ENCODE measurements at regions of chr7 and their contacts with region 1.

Region 1: DNA sequence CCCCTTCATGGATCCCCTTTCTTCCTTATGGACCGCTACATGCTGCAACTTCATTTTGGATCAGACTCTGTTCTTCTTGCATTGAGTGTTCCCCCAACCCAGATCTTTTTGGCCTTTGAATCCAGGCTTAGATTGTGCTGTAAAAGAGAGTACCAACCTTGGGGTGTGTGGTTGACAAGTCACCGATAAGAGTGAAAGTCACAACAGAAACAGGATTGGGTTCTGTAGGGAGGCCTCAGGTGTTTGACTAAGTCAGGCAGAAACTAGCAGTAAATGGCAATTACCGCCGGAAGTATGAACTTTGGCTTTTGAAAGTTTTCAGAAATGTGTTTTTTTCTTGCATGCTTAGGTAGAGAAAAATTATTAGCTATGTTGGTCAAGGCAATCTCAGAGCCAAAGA is 89.3 kb downstream of the TMEM106B start:
- DNase-seq: no peak
- ATAC-seq: no peak
- H3K4me3 ChIP-seq: no peak overlapping the region
- H3K27ac ChIP-seq: no peak overlapping the region
- H3K4me1 ChIP-seq: no peaks in the 10 kb centered on the region
- H3K27me3 ChIP-seq: no peaks in the 10 kb centered on the region; a peak in 3 of 4 replicates
- CTCF ChIP-seq: no peak
- EP300 ChIP-seq: no peak
- POLR2A ChIP-seq: no peak
- RAD21 ChIP-seq: no peak

Region 2: GRCh38 chr7:12233175-12233574 is 67.2 kb before region 1 on chr7:
- CTCF ChIA-PET with region 1: no interaction called
- POLR2A ChIA-PET with region 1: no interaction called
- RAD21 ChIA-PET with region 1: no interaction called
- SMC1A ChIA-PET with region 1: no interaction called
- in situ Hi-C with region 1: no loop called
- intact Hi-C with region 1: no loop called
- DNase-seq: no peak
- ATAC-seq: peak; percentile 31; the same call in 2 of the 3 replicates
- H3K4me3 ChIP-seq: no peak overlapping the region
- H3K27ac ChIP-seq: no peak overlapping the region
- H3K4me1 ChIP-seq: no peaks in the 10 kb centered on the region
- H3K27me3 ChIP-seq: no peaks in the 10 kb centered on the region
- CTCF ChIP-seq: no peak
- EP300 ChIP-seq: no peak
- POLR2A ChIP-seq: no peak
- RAD21 ChIP-seq: no peak

Region 3: DNA sequence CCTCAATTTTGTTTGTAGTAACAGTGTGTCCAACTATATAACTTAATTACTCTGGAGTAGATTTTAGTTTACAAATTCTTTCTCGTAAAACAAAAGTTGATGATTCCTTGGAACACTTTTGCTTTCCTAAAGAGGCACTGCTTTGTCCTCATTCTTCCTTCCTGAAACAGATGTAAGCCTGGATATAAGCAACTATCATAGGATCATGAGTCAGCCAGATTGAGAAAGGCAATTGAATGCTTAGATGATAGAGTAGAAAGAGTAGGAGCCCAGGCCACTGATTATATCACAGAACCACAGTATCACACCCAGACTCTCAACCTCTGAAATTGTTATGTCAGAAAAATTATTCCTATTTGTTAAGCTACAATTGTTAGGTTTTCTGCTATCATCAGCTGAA is 19.4 kb before region 1 on chr7:
- CTCF ChIA-PET with region 1: no interaction called
- POLR2A ChIA-PET with region 1: no interaction called
- RAD21 ChIA-PET with region 1: no interaction called
- SMC1A ChIA-PET with region 1: no interaction called
- in situ Hi-C with region 1: no loop called
- intact Hi-C with region 1: no loop called
- DNase-seq: no peak
- ATAC-seq: no peak
- H3K4me3 ChIP-seq: no peak overlapping the region
- H3K27ac ChIP-seq: no peak overlapping the region
- H3K4me1 ChIP-seq: no peaks in the 10 kb centered on the region
- H3K27me3 ChIP-seq: no peaks in the 10 kb centered on the region; a peak in 1 of 4 replicates
- CTCF ChIP-seq: no peak
- EP300 ChIP-seq: no peak
- POLR2A ChIP-seq: no peak
- RAD21 ChIP-seq: no peak

Region 4: DNA sequence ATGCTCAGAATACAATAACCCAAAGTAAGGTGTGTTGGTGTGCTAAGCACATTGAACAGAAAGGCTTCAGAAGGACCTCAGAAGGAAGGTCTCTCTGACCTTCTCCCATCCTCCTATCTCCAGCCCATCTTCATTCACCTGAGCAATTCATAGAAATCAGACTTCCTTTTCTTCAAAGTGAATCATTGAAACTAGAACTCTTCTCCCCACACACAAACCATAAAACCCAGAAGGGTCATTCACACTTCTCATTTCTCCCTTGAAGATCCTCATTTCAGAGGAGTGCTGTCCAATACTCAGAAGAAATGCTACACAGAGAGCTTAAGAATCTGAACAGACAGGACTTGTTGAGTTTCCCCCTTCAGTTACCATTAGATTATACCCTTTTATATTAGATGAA is 13.8 kb after region 1 on chr7:
- CTCF ChIA-PET with region 1: no interaction called
- POLR2A ChIA-PET with region 1: no interaction called
- RAD21 ChIA-PET with region 1: no interaction called
- SMC1A ChIA-PET with region 1: interaction called, 11 read pairs
- in situ Hi-C with region 1: no loop called
- intact Hi-C with region 1: no loop called
- DNase-seq: no peak
- ATAC-seq: peak; percentile 40; the same call in 1 of the 3 replicates
- H3K4me3 ChIP-seq: no peak overlapping the region
- H3K27ac ChIP-seq: no peak overlapping the region
- H3K4me1 ChIP-seq: no peaks in the 10 kb centered on the region
- H3K27me3 ChIP-seq: no peaks in the 10 kb centered on the region
- CTCF ChIP-seq: no peak
- EP300 ChIP-seq: no peak
- POLR2A ChIP-seq: no peak
- RAD21 ChIP-seq: no peak

Region 5: GRCh38 chr7:12328888-12329770 is 28.7 kb after region 1 on chr7:
- CTCF ChIA-PET with region 1: no interaction called
- POLR2A ChIA-PET with region 1: no interaction called
- RAD21 ChIA-PET with region 1: no interaction called
- SMC1A ChIA-PET with region 1: no interaction called
- in situ Hi-C with region 1: no loop called
- intact Hi-C with region 1: no loop called
- DNase-seq: no peak
- ATAC-seq: no peak
- H3K4me3 ChIP-seq: no peak overlapping the region
- H3K27ac ChIP-seq: no peak overlapping the region
- H3K4me1 ChIP-seq: no peaks in the 10 kb centered on the region
- H3K27me3 ChIP-seq: no peaks in the 10 kb centered on the region
- CTCF ChIP-seq: no peak
- EP300 ChIP-seq: no peak
- POLR2A ChIP-seq: no peak
- RAD21 ChIP-seq: no peak

Measured in GM12878 (cell line).